AG04450 (cell line): ENCODE measurements at regions of chr11 and their contacts with region 1.

Region 1: GRCh38 chr11:57761301-57762234 is at the start of gene CTNND1:
- DNase-seq: peak; percentile 96
- H3K4me3 ChIP-seq: peak within 1 kb of the TSS; percentile 89
- H3K27ac ChIP-seq: peak within 1 kb of the TSS; percentile 98
- H3K27me3 ChIP-seq: no peaks in the 10 kb centered on the region
- CTCF ChIP-seq: no peak
- polyA plus RNA-seq, gene CTNND1: 190 and 191 TPM in 2 replicates

Region 2: GRCh38 chr11:57700425-57700824 is 61.1 kb before region 1 on chr11:
- CTCF ChIA-PET with region 1: interaction called, 11 read pairs
- POLR2A ChIA-PET with region 1: no interaction called
- DNase-seq: no peak
- H3K4me3 ChIP-seq: no peak overlapping the region
- H3K27ac ChIP-seq: no peak overlapping the region
- H3K27me3 ChIP-seq: no peaks in the 10 kb centered on the region
- CTCF ChIP-seq: no peak

Region 3: DNA sequence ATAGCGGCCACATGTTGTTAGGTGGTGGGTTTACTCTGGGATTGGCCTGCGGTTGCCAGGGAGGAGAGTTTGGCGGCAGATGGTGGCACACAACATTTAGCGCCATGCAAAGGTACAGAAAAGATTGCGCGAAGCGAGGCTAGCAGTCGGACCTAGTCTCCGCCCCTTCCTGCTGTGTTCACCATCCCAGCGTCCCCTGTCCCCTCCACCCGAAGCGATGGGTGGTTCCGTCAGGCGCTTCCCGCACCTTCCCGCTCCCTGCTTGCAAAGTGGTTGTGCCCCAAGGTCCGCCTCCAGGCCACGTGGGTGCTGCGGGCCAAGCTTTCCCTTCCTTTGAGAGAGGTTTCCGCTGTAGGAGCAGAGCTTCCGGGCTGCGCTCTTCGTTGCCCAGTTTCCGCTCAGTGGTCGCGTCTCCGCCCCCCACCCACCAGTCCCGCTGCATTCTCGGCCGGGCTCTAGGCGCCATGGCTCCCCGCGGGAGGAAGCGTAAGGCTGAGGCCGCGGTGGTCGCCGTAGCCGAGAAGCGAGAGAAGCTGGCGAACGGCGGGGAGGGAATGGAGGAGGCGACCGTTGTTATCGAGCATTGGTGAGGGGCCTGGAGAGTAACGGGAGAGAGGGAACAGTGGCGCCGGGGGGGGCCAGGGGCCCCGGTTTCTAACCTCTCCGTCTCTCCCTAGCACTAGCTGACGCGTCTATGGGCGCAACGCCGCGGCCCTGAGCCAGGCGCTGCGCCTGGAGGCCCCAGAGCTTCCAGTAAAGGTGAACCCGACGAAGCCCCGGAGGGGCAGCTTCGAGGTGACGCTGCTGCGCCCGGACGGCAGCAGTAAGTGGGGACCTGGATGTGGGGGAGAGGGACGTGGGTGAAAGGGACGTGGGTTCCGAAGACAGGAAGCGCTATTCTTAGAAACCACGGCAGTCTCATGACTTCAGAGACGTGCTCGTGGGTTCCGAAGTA is 20.2 kb before region 1 on chr11 and contains the start of gene SELENOH:
- CTCF ChIA-PET with region 1: interaction called, 7 read pairs
- POLR2A ChIA-PET with region 1: interaction called, 15 read pairs
- DNase-seq: peak; percentile 94
- H3K4me3 ChIP-seq: peak within 1 kb of the TSS; percentile 96
- H3K27ac ChIP-seq: peak within 1 kb of the TSS; percentile 89
- H3K27me3 ChIP-seq: no peaks in the 10 kb centered on the region
- CTCF ChIP-seq: no peak
- polyA plus RNA-seq, gene SELENOH: 94.8 and 104 TPM in 2 replicates

Region 4: GRCh38 chr11:57778318-57779037 is 16.9 kb after region 1 on chr11:
- CTCF ChIA-PET with region 1: interaction called, 10 read pairs
- POLR2A ChIA-PET with region 1: interaction called, 12 read pairs
- DNase-seq: peak; percentile 95
- H3K4me3 ChIP-seq: peak overlapping the region; percentile 10
- H3K27ac ChIP-seq: peak overlapping the region; percentile 95
- H3K27me3 ChIP-seq: no peaks in the 10 kb centered on the region
- CTCF ChIP-seq: no peak

Region 5: DNA sequence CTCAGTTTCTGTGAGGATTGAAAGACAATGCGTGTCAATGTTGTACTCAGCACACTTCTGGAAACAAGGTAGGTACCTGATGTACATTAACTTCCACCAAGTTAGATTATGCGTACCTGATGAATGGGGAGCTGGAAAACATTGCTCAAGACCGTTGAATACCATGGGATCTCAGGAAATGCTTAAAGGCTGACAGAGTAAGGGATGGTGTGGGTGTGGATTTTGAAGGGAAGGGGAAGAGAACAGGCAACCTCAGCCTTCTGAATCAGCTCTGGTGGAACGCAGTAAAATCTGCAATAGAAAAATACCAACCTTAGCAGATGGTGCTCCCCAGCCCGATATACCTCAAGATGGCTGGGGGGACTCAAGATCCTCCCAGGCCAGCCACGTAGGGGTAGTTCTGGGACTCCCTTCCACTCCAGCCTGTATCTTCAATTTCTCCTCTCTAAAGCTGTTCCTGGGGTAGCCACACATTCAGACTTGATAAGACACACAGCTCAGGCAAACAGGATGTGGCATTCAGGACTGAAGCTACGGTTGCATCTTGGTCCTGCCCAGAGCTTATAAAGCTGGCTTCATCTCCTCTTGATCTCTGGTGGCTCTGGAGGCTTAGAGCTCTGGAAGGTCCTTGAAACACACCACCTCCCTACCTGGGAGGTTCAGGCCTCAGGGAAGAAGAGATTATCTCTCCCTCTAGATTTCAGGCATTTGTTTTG is 111.8 kb after region 1 on chr11:
- CTCF ChIA-PET with region 1: no interaction called
- POLR2A ChIA-PET with region 1: no interaction called
- DNase-seq: no peak
- H3K4me3 ChIP-seq: no peak overlapping the region
- H3K27ac ChIP-seq: no peak overlapping the region
- H3K27me3 ChIP-seq: no peaks in the 10 kb centered on the region
- CTCF ChIP-seq: no peak

Region 6: DNA sequence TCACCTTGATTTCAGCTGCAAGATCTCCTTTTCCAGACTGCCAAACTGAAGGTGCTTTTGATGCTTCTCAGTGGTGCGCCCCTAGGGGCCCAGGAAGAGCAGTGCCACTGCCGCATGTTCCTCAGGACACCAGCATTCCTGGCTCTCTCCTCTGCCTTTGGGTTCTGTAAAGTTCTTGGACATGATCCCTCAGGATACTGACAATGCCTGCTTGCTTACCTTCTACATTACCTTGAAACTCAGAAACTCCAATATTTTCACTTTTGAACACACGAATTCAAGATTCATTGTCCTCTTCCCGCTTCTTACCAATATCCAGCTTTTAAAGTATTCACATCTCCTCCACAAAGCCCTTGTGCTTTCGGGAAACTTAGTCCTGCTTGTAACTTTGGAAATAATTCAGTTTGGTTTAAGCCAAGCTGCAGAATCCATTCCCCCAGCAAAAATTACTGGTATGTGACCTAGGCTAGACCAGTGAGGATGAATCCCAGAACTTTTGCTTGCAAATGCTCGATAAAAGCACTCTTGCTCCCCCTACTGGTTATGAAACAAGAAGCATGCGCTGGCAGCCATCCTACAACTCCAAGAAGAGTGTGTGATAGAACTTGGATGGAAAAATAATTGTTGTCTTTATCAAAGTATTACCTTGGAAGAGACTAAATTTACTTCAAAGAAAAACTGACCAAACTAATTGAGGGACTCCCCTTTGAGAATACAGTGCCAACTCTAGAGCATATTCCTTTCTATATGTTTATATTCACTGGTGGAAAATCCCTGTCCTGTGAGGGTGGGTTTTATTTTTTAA is 762.9 kb after region 1 on chr11:
- CTCF ChIA-PET with region 1: interaction called, 10 read pairs
- POLR2A ChIA-PET with region 1: no interaction called
- DNase-seq: peak; percentile 80
- H3K4me3 ChIP-seq: no peak overlapping the region
- H3K27ac ChIP-seq: no peak overlapping the region
- H3K27me3 ChIP-seq: no peaks in the 10 kb centered on the region
- CTCF ChIP-seq: peak; percentile 89